ENCODE measurements at regions of chr17 and their contacts with region 1.

Region 1: GRCh38 chr17:45073414-45074070 is 12.4 kb downstream of the NMT1 start:
- H3K4me3 ChIP-seq: no peak overlapping the region
- H3K27ac ChIP-seq: no peak overlapping the region
- H3K4me1 ChIP-seq: no peaks in the 10 kb centered on the region; the same call in 1 of the 2 replicates
- CTCF ChIP-seq: no peak

Region 2: DNA sequence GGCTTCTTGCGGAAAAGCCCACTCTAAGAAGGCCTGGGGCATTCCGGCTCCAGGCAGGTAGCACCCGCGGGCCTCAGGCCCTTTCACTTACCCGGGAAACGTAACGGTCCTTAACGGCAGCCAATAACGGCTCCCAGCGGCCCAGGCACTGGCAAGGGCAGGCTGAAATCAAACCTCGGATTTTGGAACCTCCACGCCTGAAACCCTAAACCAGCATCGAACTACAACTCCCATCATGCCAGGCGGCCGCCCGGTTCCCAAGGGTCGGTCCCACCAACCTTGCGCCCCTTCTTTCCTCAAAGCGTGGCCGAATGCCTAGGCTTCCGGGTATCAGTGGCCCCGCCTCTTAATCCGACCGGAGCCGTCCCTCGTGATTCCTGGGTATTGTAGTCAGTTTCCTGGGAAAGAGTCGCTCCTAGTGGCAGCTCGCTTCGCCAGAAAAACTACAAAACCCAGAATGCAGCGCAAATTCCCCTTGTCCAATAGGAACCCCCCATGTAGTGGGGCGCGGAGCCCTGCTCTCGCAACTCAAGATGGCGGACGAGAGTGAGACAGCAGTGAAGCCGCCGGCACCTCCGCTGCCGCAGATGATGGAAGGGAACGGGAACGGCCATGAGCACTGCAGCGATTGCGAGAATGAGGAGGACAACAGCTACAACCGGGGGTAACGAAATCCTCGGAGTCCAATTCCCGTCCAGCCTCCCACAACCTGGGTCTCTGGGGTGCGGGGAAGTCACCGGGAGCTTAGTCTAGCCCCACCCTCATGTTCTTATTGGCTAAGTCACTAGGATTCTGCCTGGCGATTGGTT is 12.5 kb before region 1 on chr17 and contains the start of gene NMT1:
- CTCF ChIA-PET with region 1: interaction called, 3 read pairs
- POLR2A ChIA-PET with region 1: interaction called, 11 read pairs
- H3K4me3 ChIP-seq: peak within 1 kb of the TSS; percentile 93
- H3K27ac ChIP-seq: peak within 1 kb of the TSS; percentile 82
- H3K4me1 ChIP-seq: peaks cover 13% of the 10 kb centered on the region
- CTCF ChIP-seq: no peak

Region 3: DNA sequence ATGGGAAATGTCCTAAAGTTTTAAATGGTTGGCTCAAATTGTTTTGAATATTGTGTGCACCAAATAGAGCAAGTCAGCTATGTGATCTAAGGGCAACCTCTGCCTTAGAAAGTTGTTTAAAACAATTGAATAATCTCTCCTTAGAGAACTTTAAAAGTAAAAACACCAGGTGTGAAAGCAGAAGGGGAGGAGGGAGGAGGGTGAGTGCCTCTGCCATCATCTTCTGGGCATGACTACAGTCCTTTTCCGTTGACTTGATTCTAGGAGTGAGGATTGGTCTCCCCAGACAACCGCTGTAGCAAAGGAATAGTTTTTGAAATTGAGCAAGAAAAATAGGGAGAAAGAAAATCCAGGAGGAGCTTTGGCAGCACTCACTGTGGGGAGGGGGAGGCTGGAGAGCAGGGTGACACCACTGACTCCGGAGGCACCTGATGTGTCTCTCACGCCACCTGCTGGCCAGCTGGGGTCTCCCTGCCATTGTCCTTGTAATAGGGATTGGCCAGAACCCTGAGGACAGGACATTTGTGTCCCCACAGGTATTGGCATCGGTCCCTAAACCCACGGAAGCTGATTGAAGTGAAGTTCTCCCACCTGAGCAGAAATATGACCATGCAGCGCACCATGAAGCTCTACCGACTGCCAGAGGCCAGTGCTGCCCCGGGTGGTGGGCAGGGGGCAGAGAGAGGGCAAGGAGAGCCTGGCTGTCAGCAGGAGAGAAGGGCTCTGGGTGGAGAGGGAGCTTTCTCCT is 25.5 kb after region 1 on chr17:
- CTCF ChIA-PET with region 1: interaction called, 10 read pairs
- POLR2A ChIA-PET with region 1: no interaction called
- H3K4me3 ChIP-seq: no peak overlapping the region
- H3K27ac ChIP-seq: no peak overlapping the region
- H3K4me1 ChIP-seq: no peaks in the 10 kb centered on the region
- CTCF ChIP-seq: peak; percentile 88